GM12878 (cell line): ENCODE measurements at regions of chr1 and their contacts with region 1.

Region 1: GRCh38 chr1:224454397-224455066 is 19.9 kb upstream of the WDR26 start:
- DNase-seq: no peak
- ATAC-seq: no peak
- H3K4me3 ChIP-seq: no peak overlapping the region
- H3K27ac ChIP-seq: no peak overlapping the region
- H3K4me1 ChIP-seq: no peaks in the 10 kb centered on the region
- H3K27me3 ChIP-seq: no peaks in the 10 kb centered on the region
- CTCF ChIP-seq: no peak
- EP300 ChIP-seq: no peak
- POLR2A ChIP-seq: no peak
- RAD21 ChIP-seq: no peak

Region 2: GRCh38 chr1:224356685-224357625 is 97.6 kb before region 1 on chr1 and contains the start of gene CNIH4:
- CTCF ChIA-PET with region 1: interaction called, 12 read pairs
- POLR2A ChIA-PET with region 1: no interaction called
- RAD21 ChIA-PET with region 1: interaction called, 9 read pairs
- SMC1A ChIA-PET with region 1: interaction called, 7 read pairs
- in situ Hi-C with region 1: no loop called
- intact Hi-C with region 1: no loop called
- DNase-seq: peak; percentile 79
- ATAC-seq: peak; percentile 98
- H3K4me3 ChIP-seq: peak within 1 kb of the TSS; percentile 85
- H3K27ac ChIP-seq: peak within 1 kb of the TSS; percentile 30; the same call in 1 of the 2 replicates
- H3K4me1 ChIP-seq: no peaks in the 10 kb centered on the region
- H3K27me3 ChIP-seq: no peaks in the 10 kb centered on the region
- CTCF ChIP-seq: no peak
- EP300 ChIP-seq: no peak
- POLR2A ChIP-seq: peak; percentile 95
- RAD21 ChIP-seq: no peak
- polyA plus RNA-seq, gene CNIH4: 134 to 173 TPM

Region 3: DNA sequence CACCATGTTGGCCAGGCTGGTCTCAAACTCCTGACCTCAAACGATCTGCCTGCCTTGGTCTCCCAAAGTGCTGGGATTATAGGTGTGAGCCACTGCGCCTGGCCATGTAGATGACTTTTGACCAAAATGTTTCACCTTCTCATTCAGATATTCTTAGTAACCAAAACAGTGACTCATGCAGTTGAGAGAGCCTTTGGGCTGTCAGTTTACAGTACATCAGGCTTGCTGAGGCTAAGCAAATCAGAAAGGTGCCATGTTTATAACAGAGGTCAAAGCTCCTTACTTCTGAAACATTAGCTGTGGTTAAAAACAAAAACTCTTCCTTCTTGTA is 76.9 kb before region 1 on chr1:
- CTCF ChIA-PET with region 1: interaction called, 17 read pairs
- POLR2A ChIA-PET with region 1: interaction called, 11 read pairs
- RAD21 ChIA-PET with region 1: interaction called, 3 read pairs
- SMC1A ChIA-PET with region 1: interaction called, 9 read pairs
- in situ Hi-C with region 1: no loop called
- intact Hi-C with region 1: no loop called
- DNase-seq: peak; percentile 62
- ATAC-seq: peak; percentile 76
- H3K4me3 ChIP-seq: no peak overlapping the region
- H3K27ac ChIP-seq: 0 out of 2 replicates have a peak overlapping the region, but pooled peaks have one; percentile 3
- H3K4me1 ChIP-seq: peaks cover 55% of the 10 kb centered on the region
- H3K27me3 ChIP-seq: no peaks in the 10 kb centered on the region
- CTCF ChIP-seq: no peak
- EP300 ChIP-seq: no peak
- POLR2A ChIP-seq: no peak
- RAD21 ChIP-seq: no peak

Region 4: DNA sequence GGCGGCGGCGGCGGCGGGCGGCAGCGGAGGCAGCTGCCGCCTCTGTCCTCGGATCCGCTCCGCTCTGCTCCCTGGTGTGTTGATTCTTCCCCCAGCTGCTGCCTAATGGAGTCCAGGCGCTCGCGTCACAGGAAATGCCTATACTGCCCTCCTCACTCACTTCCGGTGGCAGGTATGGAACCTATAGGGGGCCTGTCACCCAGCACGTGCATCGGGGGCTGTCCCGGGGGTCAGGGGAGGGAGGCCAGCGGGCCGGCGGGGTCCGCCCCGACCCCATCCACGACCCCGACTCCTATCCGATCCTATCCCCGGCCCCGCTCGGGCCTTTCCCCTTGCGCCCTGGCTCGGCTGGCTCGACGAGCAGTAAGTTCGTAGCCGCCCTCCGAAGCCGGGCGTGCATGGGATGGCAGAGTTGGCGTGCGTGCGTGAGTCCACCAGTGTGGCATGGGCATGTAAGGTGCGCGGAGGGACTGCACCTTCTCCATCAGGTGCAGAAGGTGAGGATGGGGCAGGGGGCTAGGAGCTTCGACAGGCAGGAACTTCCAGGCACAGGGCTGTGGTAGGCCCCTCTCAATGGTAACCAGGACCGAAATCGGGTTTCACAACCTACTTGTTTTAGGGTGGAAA is 19.7 kb before region 1 on chr1 and contains the start of gene WDR26:
- CTCF ChIA-PET with region 1: interaction called, 48 read pairs
- POLR2A ChIA-PET with region 1: interaction called, 3 read pairs
- RAD21 ChIA-PET with region 1: interaction called, 17 read pairs
- SMC1A ChIA-PET with region 1: interaction called, 24 read pairs
- in situ Hi-C with region 1: no loop called
- intact Hi-C with region 1: no loop called
- DNase-seq: peak; percentile 40
- ATAC-seq: peak; percentile 89
- H3K4me3 ChIP-seq: peak within 1 kb of the TSS; percentile 89
- H3K27ac ChIP-seq: peak within 1 kb of the TSS; percentile 91
- H3K4me1 ChIP-seq: peaks cover 12% of the 10 kb centered on the region
- H3K27me3 ChIP-seq: no peaks in the 10 kb centered on the region
- CTCF ChIP-seq: peak in 1 of 3 experiments; percentile 19; a peak in 1 of 6 replicates
- EP300 ChIP-seq: no peak
- POLR2A ChIP-seq: peak; percentile 87
- RAD21 ChIP-seq: no peak
- polyA plus RNA-seq, gene WDR26: 8.9 to 10.5 TPM